ENCODE measurements at regions of chr18 and their contacts with region 1.

Region 1: GRCh38 chr18:48777026-48777743 is 173.6 kb downstream of the SMAD7 start:
- DNase-seq: peak; percentile 40 to 78 (median 67)
- ATAC-seq: peak; percentile 86
- H3K4me3 ChIP-seq: no peak overlapping the region
- H3K4me3 Mint-ChIP-seq: no peak overlapping the region
- H3K27ac ChIP-seq: no peak overlapping the region
- H3K27ac Mint-ChIP-seq: peak overlapping the region in 1 of 9 donors; percentile 13
- H3K4me1 ChIP-seq: peaks cover 4 to 8% of the 10 kb centered on the region in 2 donors
- H3K4me1 Mint-ChIP-seq: peaks cover 0 to 10% (median 5%) of the 10 kb centered on the region in 7 donors
- H3K27me3 ChIP-seq: no peaks in the 10 kb centered on the region
- H3K27me3 Mint-ChIP-seq: peaks cover 0 to 5% (median 0%) of the 10 kb centered on the region in 5 donors

Region 2: GRCh38 chr18:48711651-48712486 is 65.3 kb before region 1 on chr18:
- CTCF ChIA-PET with region 1: no interaction called
- POLR2A ChIA-PET with region 1: no interaction called
- intact Hi-C with region 1: no loop called
- DNase-seq: peak in 5 of 9 donors; percentile 4 to 18 (median 8)
- ATAC-seq: no peak
- H3K4me3 ChIP-seq: no peak overlapping the region
- H3K4me3 Mint-ChIP-seq: no peak overlapping the region
- H3K27ac ChIP-seq: no peak overlapping the region
- H3K27ac Mint-ChIP-seq: no peak overlapping the region
- H3K4me1 ChIP-seq: no peaks in the 10 kb centered on the region
- H3K4me1 Mint-ChIP-seq: peaks cover 0 to 8% (median under 1%) of the 10 kb centered on the region in 7 donors
- H3K27me3 ChIP-seq: no peaks in the 10 kb centered on the region
- H3K27me3 Mint-ChIP-seq: peaks cover 0 to 6% (median 0%) of the 10 kb centered on the region in 5 donors

Region 3: GRCh38 chr18:48842259-48843061 is 65.3 kb after region 1 on chr18:
- CTCF ChIA-PET with region 1: interaction called, 5 read pairs
- POLR2A ChIA-PET with region 1: interaction called, 3 read pairs
- intact Hi-C with region 1: loop called in 1 of 2 experiments (anchors 1 kb)
- DNase-seq: peak; percentile 25 to 85 (median 71)
- ATAC-seq: peak; percentile 86
- H3K4me3 ChIP-seq: peak overlapping the region; percentile 37
- H3K4me3 Mint-ChIP-seq: peak overlapping the region; percentile 51 to 80 (median 75)
- H3K27ac ChIP-seq: peak overlapping the region; percentile 48
- H3K27ac Mint-ChIP-seq: peak overlapping the region; percentile 92 to 97 (median 93)
- H3K4me1 ChIP-seq: peaks cover 58 to 72% of the 10 kb centered on the region in 2 donors
- H3K4me1 Mint-ChIP-seq: peaks cover 55 to 90% (median 72%) of the 10 kb centered on the region in 7 donors
- H3K27me3 ChIP-seq: no peaks in the 10 kb centered on the region
- H3K27me3 Mint-ChIP-seq: no peaks in the 10 kb centered on the region

Region 4: DNA sequence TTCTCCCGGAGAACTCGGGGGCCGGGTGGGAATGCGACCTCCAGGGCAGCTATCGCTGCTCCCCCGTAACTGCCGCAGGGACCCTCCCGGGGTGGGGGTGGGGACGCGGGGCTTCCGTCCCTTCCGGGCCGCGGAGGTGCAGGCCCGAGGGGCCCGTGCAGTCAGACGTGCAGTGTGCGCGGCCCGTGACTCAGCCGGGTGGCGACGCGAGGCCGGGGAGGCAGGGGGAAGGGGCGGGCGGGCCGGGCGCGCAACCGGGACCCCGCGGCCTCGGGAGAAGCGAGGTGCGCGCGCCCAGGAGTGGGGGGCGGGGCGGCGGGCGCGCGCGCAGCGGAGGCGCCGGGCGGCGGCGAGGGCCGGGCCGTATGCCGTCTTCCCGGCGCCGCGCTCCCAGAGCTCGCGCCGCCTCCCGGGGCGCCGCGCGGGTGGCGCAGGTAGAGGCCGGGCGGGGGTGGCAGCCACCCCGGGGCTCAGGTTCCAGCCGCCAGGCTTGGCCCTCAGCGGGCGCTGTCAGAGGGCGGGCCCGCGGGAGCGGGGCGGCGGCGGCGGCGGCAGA is 198.5 kb after region 1 on chr18:
- CTCF ChIA-PET with region 1: interaction called, 3 read pairs
- POLR2A ChIA-PET with region 1: no interaction called
- intact Hi-C with region 1: loop called (anchors 1 to 2 kb)
- DNase-seq: peak in 8 of 9 donors; percentile 29 to 66 (median 38)
- ATAC-seq: peak; percentile 79
- H3K4me3 ChIP-seq: peak overlapping the region; percentile 50
- H3K4me3 Mint-ChIP-seq: peak overlapping the region in 7 of 10 donors; percentile 35 to 83 (median 59)
- H3K27ac ChIP-seq: no peak overlapping the region
- H3K27ac Mint-ChIP-seq: no peak overlapping the region
- H3K4me1 ChIP-seq: no peaks in the 10 kb centered on the region
- H3K4me1 Mint-ChIP-seq: peaks cover 0 to 16% (median 11%) of the 10 kb centered on the region in 7 donors
- H3K27me3 ChIP-seq: no peaks in the 10 kb centered on the region
- H3K27me3 Mint-ChIP-seq: peaks cover 8 to 65% (median 18%) of the 10 kb centered on the region in 5 donors

Region 5: DNA sequence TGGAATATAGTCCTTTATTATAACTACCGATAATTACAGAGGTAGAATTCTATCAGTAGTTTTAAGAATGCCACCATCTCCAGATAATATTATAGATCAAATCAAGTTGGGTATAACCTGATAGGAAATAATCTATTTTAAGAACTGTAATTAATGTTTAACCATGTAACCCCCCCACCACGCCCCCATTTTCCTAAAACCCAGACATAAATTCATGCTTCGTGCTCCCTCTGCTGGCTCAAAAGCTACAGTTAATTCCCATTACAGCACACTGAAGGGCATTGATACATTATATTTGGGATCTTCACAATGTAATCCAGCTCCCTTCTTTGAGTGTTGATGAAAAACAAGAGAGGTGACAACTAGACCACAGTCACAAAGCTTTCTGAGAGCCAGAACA is 401.6 kb after region 1 on chr18:
- CTCF ChIA-PET with region 1: interaction called, 4 read pairs
- POLR2A ChIA-PET with region 1: no interaction called
- intact Hi-C with region 1: loop called (anchors 1 to 10 kb)
- DNase-seq: no peak
- ATAC-seq: no peak
- H3K4me3 ChIP-seq: no peak overlapping the region
- H3K4me3 Mint-ChIP-seq: no peak overlapping the region
- H3K27ac ChIP-seq: no peak overlapping the region
- H3K27ac Mint-ChIP-seq: no peak overlapping the region
- H3K4me1 ChIP-seq: no peaks in the 10 kb centered on the region
- H3K4me1 Mint-ChIP-seq: peaks cover 4 to 21% (median 9%) of the 10 kb centered on the region in 7 donors
- H3K27me3 ChIP-seq: no peaks in the 10 kb centered on the region
- H3K27me3 Mint-ChIP-seq: peaks cover 0 to 15% (median 0%) of the 10 kb centered on the region in 5 donors

Region 6: GRCh38 chr18:49412679-49413078 is 635.5 kb after region 1 on chr18:
- CTCF ChIA-PET with region 1: interaction called, 4 read pairs
- POLR2A ChIA-PET with region 1: no interaction called
- intact Hi-C with region 1: loop called in 1 of 2 experiments (anchors 1 kb)
- DNase-seq: peak in 3 of 9 donors; percentile 15 to 31 (median 21)
- ATAC-seq: no peak
- H3K4me3 ChIP-seq: no peak overlapping the region
- H3K4me3 Mint-ChIP-seq: peak overlapping the region in 8 of 10 donors; percentile 1 to 61 (median 38)
- H3K27ac ChIP-seq: no peak overlapping the region
- H3K27ac Mint-ChIP-seq: peak overlapping the region; percentile 13 to 83 (median 77)
- H3K4me1 ChIP-seq: peaks cover 0 to 16% of the 10 kb centered on the region in 2 donors
- H3K4me1 Mint-ChIP-seq: peaks cover 13 to 51% (median 47%) of the 10 kb centered on the region in 7 donors
- H3K27me3 ChIP-seq: no peaks in the 10 kb centered on the region
- H3K27me3 Mint-ChIP-seq: no peaks in the 10 kb centered on the region

Measured in naive thymus-derived CD4-positive, alpha-beta T cell (primary cell).